ENCODE measurements at regions of chr5 and their contacts with region 1.

Region 1: DNA sequence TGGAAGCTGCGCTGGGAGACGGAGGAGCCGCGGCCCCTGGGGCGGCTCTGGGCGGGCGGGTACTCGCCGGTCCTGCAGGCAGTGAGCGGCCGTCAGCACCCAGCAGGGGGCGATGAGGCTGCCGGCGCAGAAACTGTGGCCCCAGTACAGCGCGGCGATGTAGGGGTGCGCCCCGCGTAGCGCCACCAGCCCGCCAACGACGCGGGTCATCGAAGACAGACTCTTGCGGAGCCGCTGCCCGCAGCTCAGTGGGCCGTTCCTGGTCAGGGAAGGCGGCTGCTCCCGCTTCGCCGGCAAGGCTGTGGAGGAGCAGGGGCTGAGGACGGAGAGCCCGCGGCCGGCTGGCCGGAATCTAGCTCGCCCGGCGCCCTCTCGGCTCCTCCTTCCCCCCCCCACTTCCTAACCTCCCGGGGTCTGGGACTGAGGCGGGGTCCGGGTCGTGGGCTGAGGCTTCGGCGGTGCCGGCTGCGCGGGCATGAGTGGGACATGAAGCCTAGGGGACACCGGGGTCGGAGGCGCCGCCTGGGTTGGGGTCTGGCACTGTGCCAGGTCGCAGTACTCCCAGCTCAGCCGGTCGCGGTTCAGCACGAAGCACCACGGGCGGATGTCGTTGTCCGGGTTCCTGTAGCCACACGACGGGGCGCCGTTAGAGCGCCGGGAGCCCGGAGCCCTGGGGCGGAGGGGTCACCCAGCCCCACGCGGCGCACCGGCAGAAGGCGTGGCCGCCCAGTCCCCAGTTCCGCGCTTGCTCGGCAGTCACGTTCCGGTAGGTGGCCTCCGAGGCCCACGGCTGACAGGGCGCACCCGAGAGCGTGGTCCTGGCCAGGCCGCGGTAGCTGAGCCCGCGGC is 3.6 kb upstream of the PFN3 start:
- DNase-seq: peak; percentile 49
- H3K4me3 ChIP-seq: peak overlapping the region; percentile 69
- H3K27ac ChIP-seq: no peak overlapping the region
- H3K27me3 ChIP-seq: peaks cover 50% of the 10 kb centered on the region
- CTCF ChIP-seq: peak; percentile 76

Region 2: DNA sequence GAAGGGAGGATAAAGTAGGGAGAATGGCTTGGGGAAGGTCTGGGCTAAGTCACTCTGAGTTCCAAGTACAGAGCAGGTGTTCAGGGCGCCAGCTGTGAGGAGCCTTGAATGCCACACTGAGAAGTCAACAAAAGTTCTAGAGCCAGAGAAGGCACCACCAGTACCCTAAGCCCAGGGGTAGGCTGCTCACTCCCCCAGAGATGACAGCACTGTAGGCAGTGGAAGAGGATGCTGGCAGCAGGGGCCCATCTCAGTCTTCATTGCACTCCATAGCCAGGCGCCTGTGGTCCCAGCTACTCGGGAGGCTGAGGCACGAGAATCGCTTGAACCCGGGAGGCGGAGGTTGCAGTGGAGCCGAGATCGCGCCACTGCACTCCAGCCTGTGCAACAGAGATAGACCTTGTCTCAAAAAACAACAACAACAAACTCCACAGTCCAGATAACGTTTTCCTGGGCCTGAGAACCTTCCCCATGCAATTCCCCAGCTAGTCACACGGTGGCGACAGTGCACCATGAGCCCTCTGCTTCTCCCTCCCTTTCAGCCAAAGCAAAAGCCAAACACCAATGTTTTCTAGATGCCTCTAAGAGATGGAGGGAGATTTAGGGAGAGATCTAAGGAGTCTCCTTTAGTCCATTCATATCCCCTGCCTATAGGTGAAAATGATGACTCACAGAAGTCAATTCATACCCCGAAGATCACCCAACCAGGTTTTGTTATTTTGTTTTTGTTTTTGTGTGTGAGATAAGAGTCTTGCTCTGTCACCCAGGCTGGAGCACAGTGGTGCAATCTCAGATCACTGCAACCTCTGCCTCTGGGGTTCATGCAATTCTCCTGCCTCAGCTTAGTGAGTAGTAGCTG is 290.2 kb before region 1 on chr5:
- CTCF ChIA-PET with region 1: interaction called, 13 read pairs
- POLR2A ChIA-PET with region 1: no interaction called
- DNase-seq: no peak
- H3K4me3 ChIP-seq: no peak overlapping the region
- H3K27ac ChIP-seq: no peak overlapping the region
- H3K27me3 ChIP-seq: no peaks in the 10 kb centered on the region
- CTCF ChIP-seq: peak; percentile 100

Region 3: DNA sequence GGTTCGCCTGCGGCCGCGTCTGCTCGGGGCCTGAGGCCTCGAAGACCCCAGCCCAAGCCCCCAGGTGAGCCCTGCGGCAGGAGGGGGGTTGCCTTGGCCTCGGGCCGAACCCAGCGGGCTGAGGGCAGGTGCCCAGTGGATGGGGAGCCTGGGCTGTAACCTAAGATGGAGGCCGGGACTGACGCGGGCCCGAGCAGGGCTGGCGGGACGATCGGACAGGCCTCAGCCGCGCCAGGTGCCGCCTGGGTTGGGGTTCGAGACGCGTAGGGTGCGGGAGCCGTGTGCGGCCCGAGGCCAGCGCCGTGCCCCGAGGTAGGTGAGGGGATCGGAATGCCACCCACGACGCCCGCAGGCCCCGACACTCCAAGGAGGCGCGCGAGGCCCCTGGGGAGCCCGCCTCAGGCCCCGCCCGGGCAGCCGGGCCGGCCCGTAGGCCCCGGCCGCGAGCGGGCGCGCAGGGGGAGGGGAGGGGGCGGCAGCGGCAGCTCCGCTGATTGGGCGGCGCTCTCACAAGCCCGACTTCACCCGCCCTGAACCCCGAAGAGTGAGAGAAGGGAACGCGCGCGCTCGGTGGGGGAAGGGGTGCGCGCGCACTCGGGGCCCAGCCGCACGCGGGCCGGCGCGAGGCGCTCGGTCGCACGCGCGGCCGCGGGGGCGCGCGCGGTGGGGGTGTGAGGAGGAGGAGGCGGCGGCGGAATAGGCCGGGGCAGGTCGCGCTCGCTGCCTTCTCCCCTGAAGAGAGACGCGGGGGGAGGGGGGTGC is 270.7 kb before region 1 on chr5 and contains the start of gene NSD1:
- CTCF ChIA-PET with region 1: no interaction called
- POLR2A ChIA-PET with region 1: no interaction called
- DNase-seq: no peak
- H3K4me3 ChIP-seq: peak within 1 kb of the TSS; percentile 64
- H3K27ac ChIP-seq: peak within 1 kb of the TSS; percentile 21
- H3K27me3 ChIP-seq: no peaks in the 10 kb centered on the region
- CTCF ChIP-seq: no peak
- polyA plus RNA-seq, gene NSD1: 25.6 and 33.4 TPM in 2 replicates

Region 4: GRCh38 chr5:177370488-177371119 is 33.4 kb before region 1 on chr5:
- CTCF ChIA-PET with region 1: interaction called, 11 read pairs
- POLR2A ChIA-PET with region 1: no interaction called
- DNase-seq: peak; percentile 72
- H3K4me3 ChIP-seq: peak overlapping the region; percentile 65
- H3K27ac ChIP-seq: no peak overlapping the region
- H3K27me3 ChIP-seq: no peaks in the 10 kb centered on the region
- CTCF ChIP-seq: peak; percentile 60

Region 5: DNA sequence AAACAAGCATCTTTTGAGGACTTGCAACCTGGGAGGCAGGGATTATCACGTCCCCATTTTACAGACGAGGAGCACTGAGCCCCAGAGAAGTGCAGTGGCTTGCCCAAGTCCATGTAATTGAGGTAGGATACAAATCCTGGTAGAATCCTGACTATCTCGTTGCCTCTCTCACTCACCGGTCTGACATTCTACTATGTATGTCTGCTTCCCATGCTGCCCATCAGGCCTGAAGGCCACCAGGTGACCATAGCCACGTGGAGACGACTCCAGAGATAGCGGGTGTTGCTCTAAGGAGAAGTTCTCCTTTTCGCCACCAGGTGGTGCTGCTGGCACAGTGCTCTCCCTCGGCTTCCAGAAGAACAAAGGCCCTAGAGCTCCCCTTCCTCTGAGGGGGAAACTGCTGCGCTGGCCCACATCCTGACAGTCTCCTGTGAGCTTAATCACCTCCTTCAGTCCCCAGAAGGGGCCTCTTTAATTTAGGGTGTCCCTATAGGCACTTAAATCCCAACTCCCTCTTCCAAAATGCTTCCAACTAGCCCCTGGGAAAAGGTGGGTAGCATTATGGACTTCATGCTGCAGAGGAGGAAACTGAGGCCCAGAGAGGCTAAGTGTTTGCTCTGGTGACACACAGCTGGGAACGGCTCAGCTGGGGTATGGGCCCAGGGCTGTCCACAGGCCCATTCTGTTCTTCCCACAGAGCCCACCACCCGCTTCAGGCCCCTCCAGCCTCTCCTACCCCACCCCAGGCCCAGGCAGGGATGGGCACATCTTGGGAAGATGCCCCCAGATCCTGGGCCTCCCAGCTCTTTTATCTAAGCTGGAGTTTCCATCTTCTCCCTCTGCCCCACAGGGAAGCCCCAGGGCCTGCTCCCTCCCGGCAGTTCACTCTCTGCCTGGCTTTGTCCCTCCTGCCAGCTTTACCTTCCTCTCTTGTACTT is 13.4 kb before region 1 on chr5:
- CTCF ChIA-PET with region 1: interaction called, 120 read pairs
- POLR2A ChIA-PET with region 1: interaction called, 15 read pairs
- DNase-seq: no peak
- H3K4me3 ChIP-seq: no peak overlapping the region
- H3K27ac ChIP-seq: peak overlapping the region; percentile 89
- H3K27me3 ChIP-seq: peaks cover 20% of the 10 kb centered on the region
- CTCF ChIP-seq: peak; percentile 95

Region 6: GRCh38 chr5:177425801-177426565 is 22.0 kb after region 1 on chr5:
- CTCF ChIA-PET with region 1: interaction called, 24 read pairs
- POLR2A ChIA-PET with region 1: interaction called, 26 read pairs
- DNase-seq: peak; percentile 100
- H3K4me3 ChIP-seq: peak overlapping the region; percentile 70
- H3K27ac ChIP-seq: peak overlapping the region; percentile 96
- H3K27me3 ChIP-seq: no peaks in the 10 kb centered on the region
- CTCF ChIP-seq: no peak

Region 7: GRCh38 chr5:177454397-177455035 is 50.5 kb after region 1 on chr5:
- CTCF ChIA-PET with region 1: interaction called, 90 read pairs
- POLR2A ChIA-PET with region 1: interaction called, 26 read pairs
- DNase-seq: no peak
- H3K4me3 ChIP-seq: peak overlapping the region; percentile 51
- H3K27ac ChIP-seq: peak overlapping the region; percentile 11
- H3K27me3 ChIP-seq: no peaks in the 10 kb centered on the region
- CTCF ChIP-seq: peak; percentile 77

Region 8: DNA sequence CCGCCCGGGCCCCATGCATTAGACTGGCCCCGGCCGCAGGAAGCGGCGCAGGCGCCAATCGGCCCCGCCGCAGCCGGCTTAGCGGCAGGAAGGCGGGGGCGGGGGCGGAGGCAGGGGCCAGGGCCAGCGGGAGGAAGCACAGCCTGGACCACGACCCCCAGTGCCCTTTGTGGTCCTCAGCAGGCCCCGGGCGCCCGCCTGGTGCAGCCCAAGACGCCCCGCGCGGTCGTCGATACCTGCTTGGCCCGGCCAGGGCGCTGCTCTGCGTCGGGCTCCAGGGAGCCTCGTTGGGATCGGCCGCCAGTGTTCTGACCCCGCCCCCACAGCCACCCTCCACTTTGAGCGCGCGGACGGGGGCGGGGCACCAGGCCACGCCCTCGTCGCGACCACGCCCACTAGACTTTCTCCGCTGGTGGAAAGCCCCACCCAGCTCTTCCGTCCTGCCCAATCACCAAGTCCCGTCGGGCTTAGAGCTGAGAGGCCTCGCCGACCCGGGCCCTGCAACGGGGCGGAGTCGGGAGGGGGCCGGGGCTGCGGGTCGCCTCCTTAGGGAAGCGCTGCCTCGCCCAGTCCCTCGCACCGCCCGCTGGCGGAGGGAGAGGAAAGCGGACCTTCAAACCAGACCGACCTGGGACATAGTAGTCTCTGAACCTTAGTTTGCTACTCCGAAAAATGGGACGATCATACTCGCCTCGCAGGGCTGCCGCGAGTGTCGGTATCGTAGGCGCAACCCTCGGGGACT is 93.4 kb after region 1 on chr5 and contains the start of gene PDLIM7:
- CTCF ChIA-PET with region 1: interaction called, 25 read pairs
- POLR2A ChIA-PET with region 1: interaction called, 6 read pairs
- DNase-seq: peak; percentile 95
- H3K4me3 ChIP-seq: peak within 1 kb of the TSS; percentile 95
- H3K27ac ChIP-seq: peak within 1 kb of the TSS; percentile 99
- H3K27me3 ChIP-seq: no peaks in the 10 kb centered on the region
- CTCF ChIP-seq: peak; percentile 15; the same call in 1 of the 2 replicates
- polyA plus RNA-seq, gene PDLIM7: 195 and 268 TPM in 2 replicates

Measured in AG04450 (cell line).